HAP-1 (cell line): ENCODE measurements at regions of chr2 and their contacts with region 1.

Region 1: GRCh38 chr2:198296665-198297308 is 492.4 kb downstream of the PLCL1 start:
- DNase-seq: peak; percentile 54 to 70
- H3K4me3 ChIP-seq: no peak overlapping the region
- H3K4me1 ChIP-seq: no peaks in the 10 kb centered on the region
- H3K27me3 ChIP-seq: no peaks in the 10 kb centered on the region

Region 2: GRCh38 chr2:197388866-197389587 is 907.8 kb before region 1 on chr2:
- in situ Hi-C with region 1: no loop called
- DNase-seq: no peak
- H3K4me3 ChIP-seq: no peak overlapping the region
- H3K4me1 ChIP-seq: no peaks in the 10 kb centered on the region
- H3K27me3 ChIP-seq: no peaks in the 10 kb centered on the region

Region 3: GRCh38 chr2:197804049-197804757 is 492.6 kb before region 1 on chr2 and contains the start of gene PLCL1:
- in situ Hi-C with region 1: loop called (anchors 10 kb)
- DNase-seq: peak; percentile 87 to 95
- H3K4me3 ChIP-seq: peak within 1 kb of the TSS; percentile 41
- H3K4me1 ChIP-seq: no peaks in the 10 kb centered on the region
- H3K27me3 ChIP-seq: peaks cover 42% of the 10 kb centered on the region

Region 4: DNA sequence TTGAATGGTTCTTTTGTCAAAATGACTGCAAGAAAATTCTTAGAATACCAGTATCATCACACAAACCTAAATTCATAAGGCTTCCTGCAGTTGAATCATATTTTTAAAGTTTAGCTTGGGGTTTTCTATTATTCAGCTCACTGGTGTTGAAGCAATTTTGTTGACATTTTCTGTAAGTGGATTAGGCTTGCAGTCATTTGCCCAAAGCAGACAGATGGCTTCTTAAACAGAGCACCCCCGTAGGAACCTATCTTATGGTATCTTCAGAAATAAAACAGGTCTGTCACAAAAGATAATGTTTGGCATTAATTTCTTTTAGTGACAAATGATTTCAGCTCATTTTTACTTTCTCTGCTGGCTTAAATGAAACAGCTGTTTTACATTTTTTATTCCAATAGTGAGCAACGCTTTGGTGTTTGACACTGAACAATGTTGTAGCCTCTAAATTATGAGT is 161.3 kb before region 1 on chr2:
- in situ Hi-C with region 1: loop called (anchors 10 kb)
- DNase-seq: no peak
- H3K4me3 ChIP-seq: no peak overlapping the region
- H3K4me1 ChIP-seq: no peaks in the 10 kb centered on the region
- H3K27me3 ChIP-seq: peaks cover 7% of the 10 kb centered on the region